ENCODE measurements at regions of chr7 and their contacts with region 1.

Region 1: GRCh38 chr7:25597946-25598345 is 369.7 kb upstream of the NPVF start:
- DNase-seq: no peak
- H3K4me3 ChIP-seq: no peak overlapping the region
- H3K27ac ChIP-seq: no peak overlapping the region
- H3K4me1 ChIP-seq: no peaks in the 10 kb centered on the region
- H3K27me3 ChIP-seq: no peaks in the 10 kb centered on the region
- CTCF ChIP-seq: no peak
- EP300 ChIP-seq: no peak
- POLR2A ChIP-seq: no peak

Region 2: DNA sequence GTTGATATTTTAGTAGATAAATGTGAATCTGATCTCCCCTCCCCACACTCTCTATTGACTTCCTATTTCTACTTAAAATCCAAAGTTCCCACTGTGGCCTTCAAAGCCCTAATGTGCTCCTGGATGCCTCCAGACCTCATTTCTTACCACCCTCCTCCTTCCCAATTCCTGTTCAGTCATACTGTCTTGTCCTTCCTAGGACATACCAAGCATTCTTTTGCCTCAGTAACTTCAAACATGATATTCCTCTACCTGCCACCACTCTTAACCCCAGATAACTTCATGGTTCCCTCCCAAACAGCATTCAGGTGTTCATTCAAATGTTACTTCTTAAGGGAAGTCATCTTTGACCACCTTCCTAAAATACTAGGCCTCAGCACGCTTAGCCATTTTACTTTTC is 1952.1 kb before region 1 on chr7:
- intact Hi-C with region 1: loop called in 1 of 4 experiments (anchors 10 kb)
- DNase-seq: no peak
- H3K4me3 ChIP-seq: no peak overlapping the region
- H3K27ac ChIP-seq: no peak overlapping the region
- H3K4me1 ChIP-seq: no peaks in the 10 kb centered on the region
- H3K27me3 ChIP-seq: no peaks in the 10 kb centered on the region
- CTCF ChIP-seq: no peak
- EP300 ChIP-seq: no peak
- POLR2A ChIP-seq: no peak